Activated CD4-positive, alpha-beta T cell treated with anti-CD3 and anti-CD28 coated beads, Interleukin-2, amount 10 ng/mL, durations not matched to agents 24 days and 14 days (primary cell): ENCODE measurements at regions of chr11 and their contacts with region 1.

Region 1: GRCh38 chr11:57712256-57713150 is at the start of gene TMX2:
- DNase-seq: peak; percentile 97
- H3K4me3 Mint-ChIP-seq: peak within 1 kb of the TSS; percentile 95
- H3K27ac Mint-ChIP-seq: peak within 1 kb of the TSS; percentile 96
- H3K4me1 Mint-ChIP-seq: peaks cover 39% of the 10 kb centered on the region
- H3K27me3 Mint-ChIP-seq: no peaks in the 10 kb centered on the region
- total RNA-seq, gene TMX2: 99.0 and 99.2 TPM in 2 replicates

Region 2: DNA sequence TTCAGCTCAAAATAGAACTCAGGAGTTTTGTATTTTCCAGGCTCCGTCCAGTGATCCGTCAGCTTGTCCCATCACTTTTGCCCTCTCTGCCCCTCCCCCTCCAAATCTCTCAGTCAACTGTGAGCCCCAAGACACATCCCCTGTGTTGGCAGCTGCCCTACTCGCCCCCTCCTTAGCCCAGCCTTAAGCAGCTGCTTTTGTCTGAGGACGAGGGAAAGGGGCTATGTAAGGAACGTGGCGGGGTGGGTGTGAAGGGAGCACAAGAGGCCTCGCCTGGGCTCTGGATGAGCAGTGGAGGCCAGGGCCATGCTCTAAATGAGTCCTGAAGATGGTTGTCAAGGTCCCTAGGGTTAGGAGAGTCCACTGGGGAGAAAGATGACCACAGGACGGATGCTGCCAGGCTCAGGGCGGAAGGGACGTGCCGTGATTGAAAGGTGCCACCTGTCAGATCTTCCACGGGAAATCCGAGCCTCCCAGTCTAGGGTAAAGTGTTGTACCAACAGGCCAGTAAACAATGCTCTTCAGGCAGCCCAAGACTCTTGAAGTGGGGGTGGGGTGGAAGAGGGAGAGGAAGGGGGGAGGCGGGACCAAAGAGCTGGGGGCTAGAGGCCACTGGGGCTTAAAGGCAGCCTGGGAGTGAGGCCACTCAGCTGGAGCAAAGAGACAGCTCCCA is 175.4 kb before region 1 on chr11 and contains the start of gene SMTNL1:
- intact Hi-C with region 1: no loop called
- DNase-seq: no peak
- H3K4me3 Mint-ChIP-seq: no peak within 1 kb of the TSS
- H3K27ac Mint-ChIP-seq: no peak within 1 kb of the TSS
- H3K4me1 Mint-ChIP-seq: peaks cover under 1% of the 10 kb centered on the region
- H3K27me3 Mint-ChIP-seq: no peaks in the 10 kb centered on the region
- total RNA-seq, gene SMTNL1: not detected in 2 replicates

Region 3: GRCh38 chr11:57657194-57658022 is 55.1 kb before region 1 on chr11 and contains the start of gene CLP1:
- intact Hi-C with region 1: loop called (anchors 1 kb)
- DNase-seq: peak; percentile 100
- H3K4me3 Mint-ChIP-seq: peak within 1 kb of the TSS; percentile 86
- H3K27ac Mint-ChIP-seq: peak within 1 kb of the TSS; percentile 88
- H3K4me1 Mint-ChIP-seq: peaks cover 18% of the 10 kb centered on the region
- H3K27me3 Mint-ChIP-seq: no peaks in the 10 kb centered on the region
- total RNA-seq, gene CLP1: 18.5 and 19.8 TPM in 2 replicates

Region 4: GRCh38 chr11:57792060-57792541 is 79.6 kb after region 1 on chr11:
- intact Hi-C with region 1: loop called (anchors 2 kb)
- DNase-seq: peak; percentile 95
- H3K4me3 Mint-ChIP-seq: peak overlapping the region; percentile 79
- H3K27ac Mint-ChIP-seq: peak overlapping the region; percentile 93
- H3K4me1 Mint-ChIP-seq: peaks cover 41% of the 10 kb centered on the region
- H3K27me3 Mint-ChIP-seq: no peaks in the 10 kb centered on the region

Region 5: GRCh38 chr11:57800444-57801182 is 88.1 kb after region 1 on chr11:
- intact Hi-C with region 1: loop called (anchors 2 kb)
- DNase-seq: peak; percentile 80
- H3K4me3 Mint-ChIP-seq: peak overlapping the region; percentile 32
- H3K27ac Mint-ChIP-seq: peak overlapping the region; percentile 23
- H3K4me1 Mint-ChIP-seq: peaks cover 28% of the 10 kb centered on the region
- H3K27me3 Mint-ChIP-seq: no peaks in the 10 kb centered on the region